ENCODE measurements at regions of chr5 and their contacts with region 1.

Region 1: DNA sequence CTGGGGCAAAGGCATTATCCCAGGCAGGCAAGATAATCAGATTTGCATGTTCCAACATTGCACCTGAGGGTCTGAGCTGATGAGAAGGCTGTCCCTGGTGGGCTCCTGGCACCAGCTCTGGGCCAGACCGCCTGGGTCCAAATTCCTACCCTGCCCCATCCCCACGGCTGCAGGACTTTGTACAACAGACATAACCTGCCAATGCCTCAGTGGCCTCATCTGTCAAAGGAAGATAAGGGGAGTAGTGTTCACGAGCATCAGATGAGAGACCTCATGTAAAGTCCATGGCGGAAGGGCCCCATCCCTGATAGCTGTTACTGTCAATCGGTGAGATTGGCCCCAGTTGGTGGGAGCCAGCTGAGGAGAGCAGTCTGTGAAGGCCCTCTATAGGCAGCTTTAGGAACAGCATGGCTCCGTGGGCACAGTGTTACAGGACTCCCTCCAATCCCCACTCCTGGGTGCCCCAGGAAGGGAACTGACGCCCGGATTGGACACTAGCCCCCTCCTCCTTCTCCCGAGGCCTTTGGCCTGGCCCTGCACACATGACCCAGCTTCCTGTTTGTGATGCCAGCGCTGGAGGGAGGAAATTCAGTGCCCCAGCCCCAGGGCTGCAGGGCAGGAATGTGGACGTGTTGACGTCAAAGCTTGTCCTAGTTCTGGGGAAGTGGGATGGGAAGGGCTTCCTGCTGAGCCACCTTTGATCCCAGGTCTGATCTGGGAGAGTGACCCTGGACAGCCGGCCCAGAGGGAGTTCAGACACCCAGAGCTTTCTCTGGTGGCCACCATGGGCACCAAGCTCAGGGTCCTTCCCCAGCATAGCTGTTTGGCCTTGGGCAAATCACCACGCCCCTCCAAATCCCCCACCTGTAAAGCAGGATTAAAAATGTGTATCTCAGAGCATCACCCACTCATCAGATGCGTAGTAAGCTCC is 56.2 kb downstream of the DUSP1 start:
- DNase-seq: peak; percentile 76
- ATAC-seq: peak; percentile 77
- H3K4me3 Mint-ChIP-seq: no peak overlapping the region
- H3K27ac Mint-ChIP-seq: no peak overlapping the region
- H3K4me1 Mint-ChIP-seq: peaks cover 6% of the 10 kb centered on the region
- H3K27me3 Mint-ChIP-seq: peaks cover 3% of the 10 kb centered on the region

Region 2: GRCh38 chr5:172754596-172755356 is 40.0 kb after region 1 on chr5:
- CTCF ChIA-PET with region 1: interaction called, 12 read pairs
- POLR2A ChIA-PET with region 1: no interaction called
- DNase-seq: no peak
- ATAC-seq: no peak
- H3K4me3 Mint-ChIP-seq: no peak overlapping the region
- H3K27ac Mint-ChIP-seq: no peak overlapping the region
- H3K4me1 Mint-ChIP-seq: peaks cover 7% of the 10 kb centered on the region
- H3K27me3 Mint-ChIP-seq: peaks cover 5% of the 10 kb centered on the region

Region 3: DNA sequence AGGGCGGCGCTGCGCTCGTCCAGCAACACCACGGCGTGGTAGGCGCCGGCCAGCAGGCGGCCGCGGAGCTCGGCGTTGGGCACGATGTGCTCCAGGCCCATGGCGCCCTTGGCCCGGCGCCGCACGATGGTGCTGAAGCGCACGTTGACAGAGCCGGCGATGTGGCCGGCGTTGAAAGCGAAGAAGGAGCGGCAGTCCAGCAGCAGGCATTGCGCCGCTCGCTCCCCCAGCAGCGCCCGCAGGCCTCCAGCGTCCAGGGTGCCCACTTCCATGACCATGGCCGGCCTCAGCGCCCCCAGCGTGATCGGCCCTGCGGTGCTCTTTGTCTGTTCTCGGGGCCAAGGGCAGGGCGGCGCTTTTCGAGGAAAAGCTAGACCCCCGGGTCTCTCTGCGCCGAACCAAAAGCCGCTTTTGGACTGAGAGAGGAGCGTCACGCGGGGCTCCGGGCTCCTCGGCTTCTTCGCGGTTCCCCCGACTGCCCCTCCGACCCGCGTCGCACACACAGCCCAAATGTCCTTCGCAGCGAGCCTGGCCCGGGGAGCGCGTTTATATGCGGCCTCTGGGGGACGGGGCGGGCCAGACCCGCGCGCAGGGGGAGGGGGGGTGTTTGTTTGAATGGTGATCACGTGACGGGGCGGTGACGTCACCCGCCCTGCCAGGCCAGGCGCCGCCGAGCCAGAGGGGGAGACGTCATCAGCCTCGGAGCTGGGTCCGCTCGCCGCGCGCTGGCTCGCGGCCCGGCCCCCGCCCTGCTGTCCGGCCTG is 56.1 kb after region 1 on chr5 and contains the start of gene DUSP1:
- CTCF ChIA-PET with region 1: interaction called, 59 read pairs
- POLR2A ChIA-PET with region 1: interaction called, 11 read pairs
- DNase-seq: peak; percentile 98
- ATAC-seq: peak; percentile 68
- H3K4me3 Mint-ChIP-seq: peak within 1 kb of the TSS; percentile 90
- H3K27ac Mint-ChIP-seq: peak within 1 kb of the TSS; percentile 99
- H3K4me1 Mint-ChIP-seq: peaks cover 53% of the 10 kb centered on the region
- H3K27me3 Mint-ChIP-seq: no peaks in the 10 kb centered on the region
- total RNA-seq, gene DUSP1: 55.6 to 56.6 TPM

Region 4: GRCh38 chr5:172833686-172834414 is 119.1 kb after region 1 on chr5 and contains the start of gene ERGIC1:
- CTCF ChIA-PET with region 1: interaction called, 15 read pairs
- POLR2A ChIA-PET with region 1: no interaction called
- DNase-seq: peak; percentile 79
- ATAC-seq: peak; percentile 93
- H3K4me3 Mint-ChIP-seq: peak within 1 kb of the TSS; percentile 79
- H3K27ac Mint-ChIP-seq: peak within 1 kb of the TSS; percentile 75
- H3K4me1 Mint-ChIP-seq: peaks cover 42% of the 10 kb centered on the region
- H3K27me3 Mint-ChIP-seq: no peaks in the 10 kb centered on the region
- total RNA-seq, gene ERGIC1: 50.4 to 52.7 TPM

Region 5: GRCh38 chr5:172904643-172905347 is 190.0 kb after region 1 on chr5:
- CTCF ChIA-PET with region 1: interaction called, 10 read pairs
- POLR2A ChIA-PET with region 1: no interaction called
- DNase-seq: no peak
- ATAC-seq: no peak
- H3K4me3 Mint-ChIP-seq: no peak overlapping the region
- H3K27ac Mint-ChIP-seq: no peak overlapping the region
- H3K4me1 Mint-ChIP-seq: peaks cover 4% of the 10 kb centered on the region
- H3K27me3 Mint-ChIP-seq: no peaks in the 10 kb centered on the region

Region 6: DNA sequence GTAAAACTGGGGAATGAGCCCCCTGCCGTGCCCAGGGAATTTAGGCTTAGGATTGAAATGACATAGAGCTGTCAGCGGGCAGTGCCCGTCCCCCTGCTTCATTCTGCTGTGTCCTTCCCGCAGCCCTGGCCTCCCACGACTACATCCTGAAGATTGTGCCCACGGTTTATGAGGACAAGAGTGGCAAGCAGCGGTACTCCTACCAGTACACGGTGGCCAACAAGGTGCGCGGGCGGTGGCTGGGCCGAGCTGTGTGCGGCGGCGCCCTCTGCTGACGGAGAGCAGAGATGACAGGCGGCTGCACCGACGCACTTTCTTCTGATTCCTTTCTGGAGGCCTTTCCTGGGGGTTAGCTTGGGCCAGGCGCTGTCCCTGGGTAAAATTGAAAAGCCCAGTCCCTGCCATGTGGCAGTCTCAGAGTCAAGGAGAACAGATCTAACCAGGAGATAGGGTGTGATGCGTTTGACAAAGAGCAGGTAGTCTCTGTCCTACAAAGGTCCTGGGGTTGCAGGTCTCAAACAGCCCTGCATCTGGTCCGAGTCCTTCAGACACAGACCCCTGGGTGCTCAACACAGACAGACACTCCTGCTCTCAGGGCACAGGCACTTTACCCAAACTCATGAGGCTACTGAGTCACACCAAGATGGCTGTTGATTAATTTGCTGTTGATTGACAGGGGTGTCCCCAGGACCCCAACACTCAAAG is 217.7 kb after region 1 on chr5:
- CTCF ChIA-PET with region 1: interaction called, 251 read pairs
- POLR2A ChIA-PET with region 1: no interaction called
- DNase-seq: peak; percentile 76
- ATAC-seq: peak; percentile 93
- H3K4me3 Mint-ChIP-seq: no peak overlapping the region
- H3K27ac Mint-ChIP-seq: peak overlapping the region; percentile 45
- H3K4me1 Mint-ChIP-seq: peaks cover 1% of the 10 kb centered on the region
- H3K27me3 Mint-ChIP-seq: no peaks in the 10 kb centered on the region